ENCODE measurements at regions of chr17 and their contacts with region 1.

Region 1: GRCh38 chr17:55717898-55718735 is 4.5 kb downstream of the TMEM100 start:
- DNase-seq: peak; percentile 57 to 77 (median 64)
- ATAC-seq: peak; percentile 73
- H3K4me3 ChIP-seq: no peak overlapping the region
- H3K27ac ChIP-seq: peak overlapping the region in 1 of 2 donors; percentile 64
- H3K4me1 ChIP-seq: no peaks in the 10 kb centered on the region
- H3K27me3 ChIP-seq: peaks cover 0 to 10% of the 10 kb centered on the region in 2 donors
- CTCF ChIP-seq: peak; percentile 70 to 77

Region 2: GRCh38 chr17:55625521-55625920 is 92.6 kb before region 1 on chr17:
- intact Hi-C with region 1: no loop called
- DNase-seq: no peak
- ATAC-seq: no peak
- H3K4me3 ChIP-seq: no peak overlapping the region
- H3K27ac ChIP-seq: peak overlapping the region in 1 of 2 donors; percentile 42
- H3K4me1 ChIP-seq: no peaks in the 10 kb centered on the region
- H3K27me3 ChIP-seq: no peaks in the 10 kb centered on the region
- CTCF ChIP-seq: no peak

Region 3: GRCh38 chr17:55673743-55674506 is 44.2 kb before region 1 on chr17:
- intact Hi-C with region 1: no loop called
- DNase-seq: no peak
- ATAC-seq: peak; percentile 61
- H3K4me3 ChIP-seq: no peak overlapping the region
- H3K27ac ChIP-seq: peak overlapping the region in 1 of 2 donors; percentile 90
- H3K4me1 ChIP-seq: peaks cover 5 to 32% of the 10 kb centered on the region in 2 donors
- H3K27me3 ChIP-seq: no peaks in the 10 kb centered on the region
- CTCF ChIP-seq: no peak

Region 4: GRCh38 chr17:56172517-56172982 is 454.4 kb after region 1 on chr17:
- intact Hi-C with region 1: loop called in 1 of 2 experiments (anchors 10 kb)
- DNase-seq: peak in 3 of 4 donors; percentile 2 to 52 (median 46)
- ATAC-seq: peak; percentile 92
- H3K4me3 ChIP-seq: no peak overlapping the region
- H3K27ac ChIP-seq: no peak overlapping the region
- H3K4me1 ChIP-seq: no peaks in the 10 kb centered on the region
- H3K27me3 ChIP-seq: peaks cover 0 to 5% of the 10 kb centered on the region in 2 donors
- CTCF ChIP-seq: no peak

Measured in left lung (tissue), 14 donors.